HCT116 (cell line): ENCODE measurements at regions of chr18 and their contacts with region 1.

Region 1: DNA sequence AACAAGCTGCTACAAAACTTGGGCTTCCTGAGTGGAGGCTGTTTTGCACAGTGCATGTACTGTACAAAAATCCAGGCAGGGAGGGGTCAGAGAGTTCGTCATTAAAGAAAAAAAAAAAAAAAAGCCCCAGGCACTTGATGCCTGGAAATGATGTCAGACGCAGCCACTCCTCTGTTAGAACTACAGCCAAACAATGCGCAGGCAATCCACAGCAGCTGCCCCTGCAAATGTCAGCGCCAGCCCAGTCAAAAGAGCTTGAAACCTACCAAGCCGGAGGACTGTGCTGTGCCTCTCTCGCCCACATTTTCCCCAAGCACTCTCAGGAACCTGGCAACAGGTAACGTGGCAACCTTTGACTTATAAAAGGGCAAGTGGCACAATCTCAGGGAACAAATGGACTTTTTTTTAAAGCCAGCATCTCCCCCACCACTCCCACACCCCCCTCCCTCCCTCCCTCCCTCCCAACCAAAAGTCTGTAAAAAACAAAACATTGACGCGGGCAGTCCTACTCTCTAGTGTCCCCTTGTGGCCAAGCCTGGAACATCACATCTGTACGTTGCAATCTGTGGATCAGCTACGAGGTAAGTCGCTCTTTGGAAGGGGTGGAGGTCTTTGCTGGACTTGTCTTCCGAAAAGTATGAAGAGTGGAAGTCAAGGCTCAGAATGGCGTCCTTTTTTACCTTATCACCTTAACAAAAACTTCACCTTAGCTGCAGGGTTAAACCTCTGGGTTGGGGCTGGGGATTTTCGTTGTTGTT is 144.1 kb downstream of the TGIF1 start:
- DNase-seq: peak; percentile 95
- ATAC-seq: peak; percentile 70
- H3K4me3 ChIP-seq: peak overlapping the region; percentile 60 to 81
- H3K27ac ChIP-seq: peak overlapping the region; percentile 100
- H3K4me1 ChIP-seq: peaks cover 86 to 95% of the 10 kb centered on the region in 2 experiments
- H3K27me3 ChIP-seq: no peaks in the 10 kb centered on the region
- CTCF ChIP-seq: peak in 2 of 3 experiments; percentile 73 to 86; a peak in 4 of 6 replicates
- POLR2A ChIP-seq: no peak
- RAD21 ChIP-seq: no peak

Region 2: GRCh38 chr18:3051718-3052410 is 542.2 kb before region 1 on chr18:
- CTCF ChIA-PET with region 1: no interaction called
- POLR2A ChIA-PET with region 1: no interaction called
- RAD21 ChIA-PET with region 1: no interaction called
- intact Hi-C with region 1: no loop called
- DNase-seq: no peak
- ATAC-seq: no peak; the same call in 1 of the 2 replicates
- H3K4me3 ChIP-seq: no peak overlapping the region
- H3K27ac ChIP-seq: no peak overlapping the region
- H3K4me1 ChIP-seq: peaks cover 0 to 13% of the 10 kb centered on the region in 2 experiments; a peak in 3 of 4 replicates
- H3K27me3 ChIP-seq: no peaks in the 10 kb centered on the region
- CTCF ChIP-seq: no peak
- POLR2A ChIP-seq: no peak
- RAD21 ChIP-seq: no peak

Region 3: DNA sequence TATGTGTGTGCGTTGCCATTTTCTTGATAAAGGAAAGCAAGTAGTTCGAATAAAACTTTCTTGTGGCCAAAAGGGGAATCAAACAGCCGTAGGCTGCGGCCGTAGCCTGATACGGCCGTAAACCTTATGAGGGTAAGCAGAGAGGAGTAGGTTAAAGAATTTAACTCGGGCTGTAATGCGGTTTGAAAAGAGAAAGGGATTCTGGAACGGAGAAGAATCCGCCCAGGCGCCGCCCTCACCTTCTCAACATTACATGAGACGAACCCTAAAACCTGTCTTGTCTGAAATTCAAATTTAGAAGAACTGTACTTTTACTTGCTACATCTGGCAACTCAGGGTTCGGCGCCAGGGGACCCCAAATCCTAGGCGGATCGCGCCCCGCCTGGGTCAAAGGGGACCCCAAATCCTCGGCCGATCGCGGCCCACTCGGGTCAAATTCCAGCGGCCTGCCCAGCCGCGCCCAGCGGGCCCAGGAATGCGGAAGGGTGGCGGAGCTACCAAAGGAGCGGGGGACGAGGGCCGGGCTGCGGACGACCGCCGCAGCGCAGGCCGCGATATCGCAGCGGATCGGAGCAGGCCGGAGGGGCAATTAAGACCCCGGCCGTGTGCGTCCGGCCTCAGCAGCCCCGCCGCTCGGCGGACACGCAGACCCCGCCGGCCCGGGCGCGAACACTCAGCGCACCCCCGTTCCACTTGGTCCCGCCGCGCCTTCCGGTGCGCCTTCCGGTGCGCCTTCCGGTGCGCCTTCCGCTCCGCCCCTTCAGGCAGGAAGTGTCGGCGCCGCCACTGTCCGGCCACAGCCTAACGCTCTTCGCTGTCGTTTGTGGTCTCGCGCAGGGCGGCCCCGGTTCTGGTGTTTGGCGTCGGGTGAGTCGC is 332.5 kb before region 1 on chr18 and contains the start of gene MYL12B:
- CTCF ChIA-PET with region 1: no interaction called
- POLR2A ChIA-PET with region 1: no interaction called
- RAD21 ChIA-PET with region 1: no interaction called
- intact Hi-C with region 1: loop called (anchors 5 kb)
- DNase-seq: peak; percentile 62
- ATAC-seq: peak; percentile 82
- H3K4me3 ChIP-seq: peak within 1 kb of the TSS; percentile 79 to 90
- H3K27ac ChIP-seq: peak within 1 kb of the TSS; percentile 89
- H3K4me1 ChIP-seq: peaks cover 36 to 45% of the 10 kb centered on the region in 2 experiments
- H3K27me3 ChIP-seq: no peaks in the 10 kb centered on the region
- CTCF ChIP-seq: no peak
- POLR2A ChIP-seq: peak; percentile 25
- RAD21 ChIP-seq: 0 out of 2 replicates have a peak, but pooled peaks have one; percentile 5
- total RNA-seq, gene MYL12B: 403 TPM

Region 4: DNA sequence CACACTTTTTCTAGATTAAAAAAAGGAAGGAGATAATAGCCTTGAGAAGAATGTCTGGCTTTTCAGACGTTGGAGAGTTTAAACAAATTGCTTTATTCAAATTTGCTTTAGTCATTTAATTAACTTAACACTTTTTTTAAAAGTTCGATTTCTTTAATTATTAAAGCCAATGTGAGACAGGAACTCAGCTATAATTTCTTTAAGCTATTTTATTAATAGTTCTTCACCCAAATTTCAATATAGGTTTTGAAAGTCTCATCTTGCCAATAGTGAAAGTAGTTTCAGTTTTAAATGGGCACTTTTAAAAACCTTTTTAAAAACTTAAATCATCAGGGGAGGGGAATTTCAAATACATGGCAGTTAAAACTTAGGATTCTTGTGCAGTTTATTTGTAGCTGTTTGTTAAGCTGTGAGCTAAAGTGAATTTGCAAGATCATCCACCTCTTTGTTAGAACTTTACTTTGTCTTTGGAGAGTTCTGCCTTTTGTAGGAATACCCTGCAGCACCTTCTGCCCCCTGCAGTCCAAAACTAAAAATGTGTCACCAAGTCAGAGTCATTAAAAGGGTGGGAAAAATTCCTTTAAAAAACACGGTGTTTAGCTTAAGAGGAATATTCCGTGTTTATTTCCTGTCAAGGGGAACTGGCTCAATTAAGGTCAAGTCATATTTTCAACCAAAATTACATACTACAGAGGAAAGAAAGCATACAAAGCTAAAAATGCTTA is 139.6 kb before region 1 on chr18:
- CTCF ChIA-PET with region 1: interaction called, 8 read pairs
- POLR2A ChIA-PET with region 1: interaction called, 22 read pairs
- RAD21 ChIA-PET with region 1: no interaction called
- intact Hi-C with region 1: loop called (anchors 2 kb)
- DNase-seq: no peak
- ATAC-seq: no peak
- H3K4me3 ChIP-seq: peak overlapping the region; percentile 78 to 85
- H3K27ac ChIP-seq: peak overlapping the region; percentile 90; the same call in 1 of the 2 replicates
- H3K4me1 ChIP-seq: peaks cover 36 to 72% of the 10 kb centered on the region in 2 experiments
- H3K27me3 ChIP-seq: no peaks in the 10 kb centered on the region
- CTCF ChIP-seq: peak in 2 of 3 experiments; percentile 63 to 68; a peak in 4 of 6 replicates
- POLR2A ChIP-seq: no peak
- RAD21 ChIP-seq: no peak

Region 5: DNA sequence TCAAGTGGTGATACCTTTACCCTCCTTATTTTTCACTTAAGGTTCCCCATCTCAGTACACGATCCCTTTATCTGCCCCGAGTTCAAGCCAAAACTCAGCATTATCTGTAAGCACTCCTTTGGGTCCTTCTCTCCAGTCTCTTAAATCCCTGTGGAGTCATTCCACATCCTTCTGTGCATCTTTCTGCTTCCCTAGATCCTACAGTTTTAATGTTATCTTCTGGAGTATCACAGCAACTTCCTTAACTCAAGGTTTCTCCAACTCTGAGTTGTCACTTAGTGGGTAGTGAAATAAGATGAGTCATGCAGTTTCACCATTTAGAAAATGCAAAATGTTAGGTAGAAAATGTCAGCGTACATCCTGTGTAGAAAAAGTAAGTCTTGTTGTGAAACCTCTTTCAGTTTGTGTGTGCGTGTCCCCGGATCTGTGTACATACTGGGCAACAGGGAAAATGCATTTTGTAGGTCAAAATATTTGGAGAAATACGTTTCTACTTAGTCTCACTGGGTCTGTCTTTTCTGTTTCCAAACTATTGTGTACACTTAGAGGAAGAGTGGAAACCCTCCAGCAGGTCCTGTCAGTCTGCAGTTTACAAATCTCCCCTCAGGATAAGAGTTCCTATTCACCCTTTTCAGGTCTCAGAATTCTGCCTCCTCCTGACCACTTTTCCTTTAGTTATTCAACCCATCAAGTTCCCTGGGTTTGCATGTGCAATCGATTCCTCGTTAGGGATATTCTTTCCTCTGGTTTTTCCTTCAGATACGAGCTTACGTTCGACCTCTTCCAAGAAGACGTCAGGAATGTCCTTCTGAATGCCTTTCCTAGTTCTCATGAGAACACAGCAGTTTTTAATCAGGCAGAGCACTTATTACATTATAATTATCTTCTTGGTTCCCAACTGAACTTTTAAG is 10.7 kb after region 1 on chr18:
- CTCF ChIA-PET with region 1: interaction called, 13 read pairs
- POLR2A ChIA-PET with region 1: interaction called, 40 read pairs
- RAD21 ChIA-PET with region 1: no interaction called
- intact Hi-C with region 1: no loop called
- DNase-seq: no peak
- ATAC-seq: no peak
- H3K4me3 ChIP-seq: peak overlapping the region; percentile 38 to 46
- H3K27ac ChIP-seq: peak overlapping the region; percentile 100
- H3K4me1 ChIP-seq: peaks cover 81 to 94% of the 10 kb centered on the region in 2 experiments
- H3K27me3 ChIP-seq: no peaks in the 10 kb centered on the region
- CTCF ChIP-seq: no peak
- POLR2A ChIP-seq: peak; percentile 25
- RAD21 ChIP-seq: no peak

Region 6: GRCh38 chr18:3612315-3612714 is 18.2 kb after region 1 on chr18:
- CTCF ChIA-PET with region 1: no interaction called
- POLR2A ChIA-PET with region 1: interaction called, 11 read pairs
- RAD21 ChIA-PET with region 1: no interaction called
- intact Hi-C with region 1: no loop called
- DNase-seq: no peak
- ATAC-seq: no peak
- H3K4me3 ChIP-seq: no peak overlapping the region
- H3K27ac ChIP-seq: peak overlapping the region; percentile 100
- H3K4me1 ChIP-seq: peaks cover 84 to 99% of the 10 kb centered on the region in 2 experiments
- H3K27me3 ChIP-seq: no peaks in the 10 kb centered on the region
- CTCF ChIP-seq: no peak
- POLR2A ChIP-seq: no peak
- RAD21 ChIP-seq: no peak

Region 7: GRCh38 chr18:3623769-3624545 is 29.9 kb after region 1 on chr18:
- CTCF ChIA-PET with region 1: interaction called, 4 read pairs
- POLR2A ChIA-PET with region 1: interaction called, 61 read pairs
- RAD21 ChIA-PET with region 1: interaction called in 1 of 2 experiments, 3 read pairs
- intact Hi-C with region 1: loop called (anchors 1 kb)
- DNase-seq: peak; percentile 96
- ATAC-seq: peak; percentile 77
- H3K4me3 ChIP-seq: peak overlapping the region; percentile 30 to 31
- H3K27ac ChIP-seq: peak overlapping the region; percentile 100
- H3K4me1 ChIP-seq: peaks cover 86 to 96% of the 10 kb centered on the region in 2 experiments
- H3K27me3 ChIP-seq: no peaks in the 10 kb centered on the region
- CTCF ChIP-seq: no peak
- POLR2A ChIP-seq: no peak
- RAD21 ChIP-seq: no peak

Region 8: DNA sequence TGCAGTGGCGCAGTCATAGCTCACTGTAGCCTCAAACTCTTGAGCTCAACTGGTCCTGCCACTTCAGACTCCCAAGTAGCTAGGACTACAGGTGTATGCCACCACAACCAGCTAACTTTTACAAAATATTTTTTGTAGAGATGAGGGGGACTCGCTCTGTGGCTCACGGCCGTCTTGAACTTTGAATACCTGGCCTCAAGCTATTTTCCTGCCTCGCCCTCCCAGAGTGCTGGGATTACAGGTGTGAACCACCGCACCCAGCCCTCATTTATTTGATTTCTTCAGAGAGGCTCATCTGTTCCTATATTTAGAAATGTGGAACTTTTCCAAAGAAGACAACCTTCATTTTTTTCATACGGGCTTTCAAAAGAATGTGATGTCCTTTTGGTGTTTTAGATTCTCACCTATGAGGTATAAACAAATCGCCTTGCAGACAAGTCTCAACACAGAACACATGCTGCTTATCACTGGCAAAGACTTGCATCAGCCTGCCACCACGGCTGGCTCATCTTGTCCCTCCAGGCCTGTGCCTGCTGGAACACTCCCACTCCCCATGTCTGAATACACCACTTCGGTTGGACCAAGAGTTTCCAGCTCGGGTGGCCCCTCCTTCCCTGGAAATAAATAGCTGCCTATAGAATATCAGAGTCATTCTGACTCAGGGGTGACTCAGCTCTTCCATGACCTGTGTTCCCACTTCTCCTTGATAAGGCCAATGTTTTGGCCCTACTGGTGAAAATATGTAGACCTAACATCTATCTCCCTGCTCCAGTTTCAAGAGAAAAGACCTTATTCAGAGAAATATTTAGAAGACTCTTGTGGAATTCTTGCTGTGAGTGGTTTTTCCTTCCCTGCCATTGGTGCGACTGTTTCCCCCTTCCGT is 58.5 kb after region 1 on chr18:
- CTCF ChIA-PET with region 1: no interaction called
- POLR2A ChIA-PET with region 1: interaction called, 42 read pairs
- RAD21 ChIA-PET with region 1: no interaction called
- intact Hi-C with region 1: loop called (anchors 2 kb)
- DNase-seq: peak; percentile 98
- ATAC-seq: peak; percentile 72
- H3K4me3 ChIP-seq: peak overlapping the region; percentile 39 to 52
- H3K27ac ChIP-seq: peak overlapping the region; percentile 96
- H3K4me1 ChIP-seq: peaks cover 92 to 93% of the 10 kb centered on the region in 2 experiments
- H3K27me3 ChIP-seq: no peaks in the 10 kb centered on the region
- CTCF ChIP-seq: peak in 2 of 3 experiments; percentile 7 to 13; a peak in 1 of 6 replicates
- POLR2A ChIP-seq: no peak
- RAD21 ChIP-seq: no peak